Common myeloid progenitor, CD34-positive (primary cell): ENCODE measurements at regions of chr1 and their contacts with region 1.

Region 1: GRCh38 chr1:225318706-225319575 is 108.9 kb downstream of the LBR start:
- DNase-seq: peak; percentile 19 to 33 (median 33)
- H3K4me3 ChIP-seq: no peak overlapping the region
- H3K27ac ChIP-seq: no peak overlapping the region
- H3K4me1 ChIP-seq: peaks cover 0 to 8% (median 0%) of the 10 kb centered on the region in 4 experiments
- H3K27me3 ChIP-seq: no peaks in the 10 kb centered on the region

Region 2: GRCh38 chr1:225230483-225230882 is 88.5 kb before region 1 on chr1:
- CTCF ChIA-PET with region 1: no interaction called
- POLR2A ChIA-PET with region 1: no interaction called
- DNase-seq: no peak
- H3K4me3 ChIP-seq: no peak overlapping the region
- H3K27ac ChIP-seq: no peak overlapping the region
- H3K4me1 ChIP-seq: no peaks in the 10 kb centered on the region
- H3K27me3 ChIP-seq: no peaks in the 10 kb centered on the region

Region 3: DNA sequence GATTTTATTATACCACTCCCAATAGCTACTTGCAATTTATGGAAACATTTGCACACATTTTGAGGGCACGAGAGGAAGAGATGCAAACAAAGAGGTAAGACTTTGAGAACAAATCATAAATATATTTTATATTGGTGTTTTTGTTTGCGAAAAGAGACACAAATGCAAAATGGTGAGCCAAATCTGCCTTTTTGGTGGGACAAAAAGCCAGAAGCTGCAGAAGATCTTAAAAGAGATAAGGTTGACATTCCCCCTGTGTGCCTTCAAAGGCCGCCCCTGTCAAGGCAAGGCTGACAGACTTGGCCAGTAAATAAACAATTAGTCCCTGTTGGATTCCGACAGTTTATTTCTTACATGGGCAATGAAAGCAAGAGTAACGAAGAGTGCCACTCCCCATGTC is 13.9 kb before region 1 on chr1:
- CTCF ChIA-PET with region 1: interaction called, 16 read pairs
- POLR2A ChIA-PET with region 1: no interaction called
- DNase-seq: no peak
- H3K4me3 ChIP-seq: no peak overlapping the region
- H3K27ac ChIP-seq: no peak overlapping the region
- H3K4me1 ChIP-seq: no peaks in the 10 kb centered on the region
- H3K27me3 ChIP-seq: no peaks in the 10 kb centered on the region

Region 4: DNA sequence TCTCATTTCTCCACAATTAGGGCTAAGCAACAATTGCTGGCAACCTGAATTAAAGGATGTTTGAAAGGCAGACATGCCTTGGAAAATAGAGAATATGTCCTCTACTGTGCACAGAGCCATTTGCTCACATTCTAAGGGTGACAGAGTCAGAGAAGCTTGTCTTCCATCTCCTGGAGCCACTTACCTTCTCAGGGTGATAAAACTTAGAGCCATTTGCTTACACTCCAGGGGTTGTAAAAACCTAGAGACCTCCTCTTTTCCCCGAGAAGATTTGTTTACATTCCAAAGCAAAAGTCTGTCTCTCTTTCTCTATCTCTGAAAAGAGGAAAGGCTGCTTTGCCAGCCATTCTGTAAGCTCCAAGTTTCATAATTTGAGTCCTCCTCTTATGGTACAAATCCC is 47.6 kb after region 1 on chr1:
- CTCF ChIA-PET with region 1: no interaction called
- POLR2A ChIA-PET with region 1: no interaction called
- DNase-seq: no peak
- H3K4me3 ChIP-seq: no peak overlapping the region
- H3K27ac ChIP-seq: no peak overlapping the region
- H3K4me1 ChIP-seq: peaks cover 0 to 2% (median 0%) of the 10 kb centered on the region in 4 experiments
- H3K27me3 ChIP-seq: no peaks in the 10 kb centered on the region